ENCODE measurements at regions of chr5 and their contacts with region 1.

Region 1: DNA sequence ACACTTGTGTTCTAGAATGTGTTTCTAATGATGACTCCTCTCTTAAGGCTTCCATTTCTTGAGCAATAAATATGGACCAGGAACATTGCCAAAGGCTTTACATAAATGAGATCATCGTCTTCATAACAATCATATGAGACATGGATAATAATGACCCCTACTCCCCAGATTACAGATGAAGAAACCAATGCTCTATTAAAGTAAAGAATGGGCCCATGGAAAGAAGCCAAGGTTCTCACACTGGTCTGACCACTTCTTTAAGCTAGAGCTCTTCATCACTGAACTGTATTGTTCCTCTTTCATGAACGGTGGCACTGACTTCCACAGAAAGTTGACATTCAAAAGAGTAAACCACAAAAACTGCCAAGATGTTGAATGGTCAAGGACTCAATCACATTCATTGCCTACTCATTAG is 65.3 kb downstream of the MARCHF3 start:
- DNase-seq: no peak
- ATAC-seq: peak; percentile 52
- H3K4me3 Mint-ChIP-seq: peak overlapping the region; percentile 4
- H3K27ac Mint-ChIP-seq: peak overlapping the region; percentile 42
- H3K4me1 Mint-ChIP-seq: peaks cover 64% of the 10 kb centered on the region
- H3K27me3 Mint-ChIP-seq: no peaks in the 10 kb centered on the region
- CTCF ChIP-seq: no peak

Region 2: GRCh38 chr5:126947146-126948010 is 17.7 kb before region 1 on chr5:
- CTCF ChIA-PET with region 1: no interaction called
- POLR2A ChIA-PET with region 1: interaction called, 8 read pairs
- intact Hi-C with region 1: loop called (anchors 2 kb)
- DNase-seq: no peak
- ATAC-seq: peak; percentile 75
- H3K4me3 Mint-ChIP-seq: no peak overlapping the region
- H3K27ac Mint-ChIP-seq: no peak overlapping the region
- H3K4me1 Mint-ChIP-seq: peaks cover 23% of the 10 kb centered on the region
- H3K27me3 Mint-ChIP-seq: no peaks in the 10 kb centered on the region
- CTCF ChIP-seq: no peak

Region 3: GRCh38 chr5:126998201-126998631 is 33.1 kb after region 1 on chr5:
- CTCF ChIA-PET with region 1: no interaction called
- POLR2A ChIA-PET with region 1: no interaction called
- intact Hi-C with region 1: loop called (anchors 5 kb)
- DNase-seq: no peak
- ATAC-seq: peak; percentile 47
- H3K4me3 Mint-ChIP-seq: peak overlapping the region; percentile 4
- H3K27ac Mint-ChIP-seq: peak overlapping the region; percentile 70
- H3K4me1 Mint-ChIP-seq: peaks cover 72% of the 10 kb centered on the region
- H3K27me3 Mint-ChIP-seq: no peaks in the 10 kb centered on the region
- CTCF ChIP-seq: no peak

Region 4: GRCh38 chr5:127019928-127020327 is 54.9 kb after region 1 on chr5:
- CTCF ChIA-PET with region 1: no interaction called
- POLR2A ChIA-PET with region 1: no interaction called
- intact Hi-C with region 1: no loop called
- DNase-seq: no peak
- ATAC-seq: no peak
- H3K4me3 Mint-ChIP-seq: no peak overlapping the region
- H3K27ac Mint-ChIP-seq: no peak overlapping the region
- H3K4me1 Mint-ChIP-seq: peaks cover 51% of the 10 kb centered on the region
- H3K27me3 Mint-ChIP-seq: no peaks in the 10 kb centered on the region
- CTCF ChIP-seq: no peak

Measured in activated B cell treated with CpG ODN at 0.5 μM for 24 hours (primary cell).